Activated CD4-positive, alpha-beta T cell treated with anti-CD3 and anti-CD28 coated beads for 36 hours (primary cell): ENCODE measurements at regions of chrX and their contacts with region 1.

Region 1: DNA sequence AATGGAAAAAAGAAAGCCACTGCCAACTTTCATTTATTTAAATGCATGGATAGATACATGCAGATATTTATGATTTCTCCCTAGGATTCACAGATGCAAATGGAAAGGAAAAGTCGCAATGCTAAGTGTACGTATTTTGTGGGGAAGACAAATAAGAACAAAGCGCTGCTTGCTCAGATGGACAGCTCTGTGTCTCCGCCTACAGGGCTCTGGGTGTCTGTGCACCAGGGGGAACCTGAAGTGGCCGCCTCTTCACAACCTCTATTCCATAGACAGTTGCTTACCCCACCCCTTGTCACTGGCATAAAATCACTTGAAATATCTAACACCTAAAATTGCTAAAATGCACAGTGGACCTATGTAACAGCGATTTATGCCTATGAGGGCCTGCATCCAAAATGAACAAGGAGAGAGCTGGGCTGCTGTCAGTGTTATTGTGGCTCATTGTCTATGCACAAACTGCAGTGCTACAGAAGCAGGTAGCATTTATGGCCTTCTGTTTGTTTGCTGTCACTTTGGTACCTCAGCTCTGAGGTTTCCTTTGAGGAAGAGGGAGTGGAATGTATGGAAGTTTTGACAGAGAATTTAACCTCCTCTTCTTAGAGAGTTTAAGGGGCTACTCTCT is 58.6 kb upstream of the PAGE1 start:
- DNase-seq: peak; percentile 61
- ATAC-seq: peak; percentile 72
- H3K4me3 Mint-ChIP-seq: no peak overlapping the region
- H3K27ac Mint-ChIP-seq: no peak overlapping the region
- H3K4me1 Mint-ChIP-seq: no peaks in the 10 kb centered on the region
- H3K27me3 Mint-ChIP-seq: peaks cover 3% of the 10 kb centered on the region

Region 2: GRCh38 chrX:49191033-49191871 is 563.1 kb before region 1 on chrX:
- CTCF ChIA-PET with region 1: no interaction called
- POLR2A ChIA-PET with region 1: no interaction called
- intact Hi-C with region 1: loop called in 1 of 2 experiments (anchors 2 kb)
- DNase-seq: peak; percentile 89
- ATAC-seq: peak; percentile 91
- H3K4me3 Mint-ChIP-seq: peak overlapping the region; percentile 96
- H3K27ac Mint-ChIP-seq: peak overlapping the region; percentile 97
- H3K4me1 Mint-ChIP-seq: peaks cover 23% of the 10 kb centered on the region
- H3K27me3 Mint-ChIP-seq: no peaks in the 10 kb centered on the region

Region 3: DNA sequence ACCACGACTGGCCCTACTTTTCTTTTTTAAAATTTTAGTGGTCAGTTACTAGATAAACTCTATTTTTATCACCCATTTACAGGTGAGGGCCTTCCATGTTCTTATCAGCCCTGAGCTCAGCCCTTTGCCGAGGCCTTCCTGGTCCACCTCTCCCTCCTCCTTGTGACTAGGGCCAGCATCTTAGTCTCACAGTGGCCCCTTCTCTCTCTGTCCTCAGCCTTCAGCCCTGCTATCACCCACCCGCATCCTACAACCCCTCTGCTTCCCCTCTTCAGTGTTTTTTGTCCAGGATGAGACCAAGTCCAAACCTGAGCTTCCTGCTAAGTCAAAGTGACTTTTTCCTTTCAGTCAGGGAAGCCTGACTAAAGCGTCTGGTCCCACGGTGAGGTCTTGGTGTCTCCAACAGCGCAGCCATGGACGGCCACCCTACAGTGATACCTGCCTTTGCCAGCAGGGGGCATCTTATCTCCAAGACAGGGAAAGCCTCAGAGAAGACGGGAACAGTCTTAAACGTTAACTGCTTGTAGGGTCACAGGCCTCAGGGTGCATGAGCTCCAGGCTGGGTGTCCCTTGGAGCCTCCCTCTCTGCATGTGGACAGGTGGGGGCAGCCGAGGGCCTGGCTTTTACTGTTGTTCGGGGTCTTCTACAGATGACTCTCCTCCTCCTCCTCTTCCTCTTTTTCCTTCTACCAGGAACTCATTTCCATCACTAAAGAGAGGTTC is 462.6 kb before region 1 on chrX:
- CTCF ChIA-PET with region 1: no interaction called
- POLR2A ChIA-PET with region 1: no interaction called
- intact Hi-C with region 1: loop called (anchors 1 to 5 kb)
- DNase-seq: peak; percentile 86
- ATAC-seq: peak; percentile 93
- H3K4me3 Mint-ChIP-seq: no peak overlapping the region
- H3K27ac Mint-ChIP-seq: peak overlapping the region; percentile 56
- H3K4me1 Mint-ChIP-seq: peaks cover 28% of the 10 kb centered on the region
- H3K27me3 Mint-ChIP-seq: no peaks in the 10 kb centered on the region

Region 4: GRCh38 chrX:49627086-49627777 is 127.1 kb before region 1 on chrX:
- CTCF ChIA-PET with region 1: no interaction called
- POLR2A ChIA-PET with region 1: no interaction called
- intact Hi-C with region 1: loop called in 1 of 2 experiments (anchors 1 kb)
- DNase-seq: peak; percentile 76
- ATAC-seq: peak; percentile 79
- H3K4me3 Mint-ChIP-seq: peak overlapping the region; percentile 70
- H3K27ac Mint-ChIP-seq: no peak overlapping the region
- H3K4me1 Mint-ChIP-seq: no peaks in the 10 kb centered on the region
- H3K27me3 Mint-ChIP-seq: no peaks in the 10 kb centered on the region

Region 5: DNA sequence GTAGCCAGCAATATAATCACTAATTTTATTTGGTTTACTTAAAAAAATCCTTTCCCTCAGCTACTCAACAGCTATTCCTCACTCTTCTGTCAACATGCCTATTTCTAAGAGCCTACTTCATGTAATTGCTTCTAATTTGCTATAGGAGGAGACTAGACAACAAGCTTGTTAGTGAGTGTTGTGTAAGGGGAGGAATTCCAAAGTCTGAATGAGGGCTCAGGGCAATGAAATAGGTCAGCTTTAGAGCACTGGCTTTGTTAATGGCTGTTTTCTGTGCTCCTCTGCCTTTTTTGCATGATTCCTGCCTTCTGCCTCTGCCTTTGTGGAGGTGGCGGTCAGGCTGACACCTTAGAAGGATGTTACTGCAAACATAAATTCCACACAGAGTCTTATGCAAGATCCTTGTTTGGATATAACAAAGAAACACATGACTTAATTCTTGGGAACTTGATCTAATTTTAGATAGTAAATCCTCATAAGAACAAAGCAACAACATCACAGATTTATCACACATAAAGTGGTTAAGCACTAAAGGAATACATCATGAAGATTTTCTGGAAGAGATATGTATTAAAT is 43.5 kb before region 1 on chrX:
- CTCF ChIA-PET with region 1: no interaction called
- POLR2A ChIA-PET with region 1: no interaction called
- intact Hi-C with region 1: no loop called
- DNase-seq: no peak
- ATAC-seq: no peak
- H3K4me3 Mint-ChIP-seq: no peak overlapping the region
- H3K27ac Mint-ChIP-seq: no peak overlapping the region
- H3K4me1 Mint-ChIP-seq: no peaks in the 10 kb centered on the region
- H3K27me3 Mint-ChIP-seq: peaks cover 4% of the 10 kb centered on the region

Region 6: DNA sequence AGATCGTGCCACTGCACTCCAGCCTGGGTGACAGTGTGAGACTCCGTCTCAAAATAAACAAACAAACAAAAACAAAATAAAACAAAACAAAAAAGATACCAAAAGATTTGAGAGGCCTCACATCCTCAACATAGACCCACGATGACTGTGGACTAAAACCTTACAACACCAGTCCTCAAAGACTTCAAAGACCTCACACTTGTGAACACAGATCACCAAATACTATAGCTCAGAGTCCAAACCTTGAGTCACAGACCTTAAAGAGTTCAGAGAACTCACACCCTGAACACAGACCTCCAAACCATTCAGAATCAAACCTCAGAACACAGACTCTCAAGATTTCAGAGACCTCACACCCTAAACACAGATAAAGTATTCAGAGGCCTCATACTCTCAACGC is 62.1 kb after region 1 on chrX:
- CTCF ChIA-PET with region 1: no interaction called
- POLR2A ChIA-PET with region 1: no interaction called
- intact Hi-C with region 1: no loop called
- DNase-seq: no peak
- ATAC-seq: no peak
- H3K4me3 Mint-ChIP-seq: no peak overlapping the region
- H3K27ac Mint-ChIP-seq: no peak overlapping the region
- H3K4me1 Mint-ChIP-seq: no peaks in the 10 kb centered on the region
- H3K27me3 Mint-ChIP-seq: no peaks in the 10 kb centered on the region

Region 7: GRCh38 chrX:50088645-50089044 is 334.3 kb after region 1 on chrX:
- CTCF ChIA-PET with region 1: no interaction called
- POLR2A ChIA-PET with region 1: no interaction called
- intact Hi-C with region 1: no loop called
- DNase-seq: no peak
- ATAC-seq: no peak
- H3K4me3 Mint-ChIP-seq: no peak overlapping the region
- H3K27ac Mint-ChIP-seq: no peak overlapping the region
- H3K4me1 Mint-ChIP-seq: no peaks in the 10 kb centered on the region
- H3K27me3 Mint-ChIP-seq: no peaks in the 10 kb centered on the region

Region 8: GRCh38 chrX:50327235-50327634 is 572.9 kb after region 1 on chrX:
- CTCF ChIA-PET with region 1: no interaction called
- POLR2A ChIA-PET with region 1: no interaction called
- intact Hi-C with region 1: no loop called
- DNase-seq: no peak
- ATAC-seq: no peak
- H3K4me3 Mint-ChIP-seq: no peak overlapping the region
- H3K27ac Mint-ChIP-seq: no peak overlapping the region
- H3K4me1 Mint-ChIP-seq: no peaks in the 10 kb centered on the region
- H3K27me3 Mint-ChIP-seq: no peaks in the 10 kb centered on the region